Ovary (tissue), 10 donors: ENCODE measurements at regions of chr14 and their contacts with region 1.

Region 1: DNA sequence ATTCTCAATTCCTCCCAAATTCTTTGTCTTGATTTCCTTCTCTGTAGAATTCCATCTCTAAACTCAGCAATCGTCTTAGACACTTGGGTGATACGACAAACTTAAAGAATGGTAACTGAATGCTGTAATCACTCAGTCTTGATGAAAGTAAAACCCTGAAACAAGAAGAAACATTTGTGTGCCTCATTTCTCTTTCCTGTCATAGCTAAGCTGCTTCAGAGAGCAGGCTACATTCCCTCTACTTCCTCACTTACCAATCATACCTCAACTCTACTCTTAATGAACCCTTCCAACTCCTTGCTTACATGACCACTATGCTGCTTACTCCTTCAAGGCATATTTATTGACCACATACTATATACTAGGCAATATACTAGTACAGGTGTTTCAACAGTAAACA is 8.3 kb downstream of the MAP4K5 start:
- DNase-seq: no peak
- H3K4me3 ChIP-seq: no peak overlapping the region
- H3K27ac ChIP-seq: no peak overlapping the region
- H3K4me1 ChIP-seq: peaks cover 4% of the 10 kb centered on the region
- H3K27me3 ChIP-seq: no peaks in the 10 kb centered on the region
- CTCF ChIP-seq: no peak
- EP300 ChIP-seq: no peak
- POLR2A ChIP-seq: no peak

Region 2: DNA sequence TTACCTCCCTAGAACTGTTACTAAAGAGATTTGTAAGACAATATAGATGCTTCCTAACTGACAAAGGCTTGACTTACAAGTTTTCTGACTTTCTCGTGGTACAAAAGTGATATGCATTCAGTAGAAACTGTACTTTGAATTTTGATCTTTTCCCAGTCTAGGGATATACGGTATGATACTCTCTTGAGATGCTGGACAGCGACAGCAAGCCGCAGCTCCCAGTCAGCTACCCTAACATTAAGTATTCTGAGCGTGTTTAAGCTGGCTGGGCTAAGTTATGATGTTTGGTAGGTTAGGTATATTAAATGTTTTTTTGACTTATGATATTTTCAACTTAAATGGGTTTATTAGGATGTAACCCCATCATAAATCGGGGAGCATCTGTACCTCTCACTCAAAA is 72.2 kb before region 1 on chr14:
- intact Hi-C with region 1: loop called in 1 of 4 experiments (anchors 2 kb)
- DNase-seq: no peak
- H3K4me3 ChIP-seq: no peak overlapping the region
- H3K27ac ChIP-seq: no peak overlapping the region
- H3K4me1 ChIP-seq: peaks cover 2% of the 10 kb centered on the region
- H3K27me3 ChIP-seq: no peaks in the 10 kb centered on the region
- CTCF ChIP-seq: no peak
- EP300 ChIP-seq: no peak
- POLR2A ChIP-seq: no peak